ENCODE measurements at regions of chr4 and their contacts with region 1.

Region 1: GRCh38 chr4:7192252-7193029 is at the start of gene SORCS2:
- DNase-seq: peak; percentile 72
- ATAC-seq: peak; percentile 70
- H3K4me3 Mint-ChIP-seq: peak within 1 kb of the TSS; percentile 73
- H3K27ac Mint-ChIP-seq: no peak within 1 kb of the TSS
- H3K4me1 Mint-ChIP-seq: peaks cover 27% of the 10 kb centered on the region
- H3K27me3 Mint-ChIP-seq: peaks cover 50% of the 10 kb centered on the region
- CTCF ChIP-seq: peak; percentile 36; the same call in 1 of the 2 replicates
- total RNA-seq, gene SORCS2: 5.5 to 9.1 TPM (median 6.6 TPM) in 3 replicates

Region 2: DNA sequence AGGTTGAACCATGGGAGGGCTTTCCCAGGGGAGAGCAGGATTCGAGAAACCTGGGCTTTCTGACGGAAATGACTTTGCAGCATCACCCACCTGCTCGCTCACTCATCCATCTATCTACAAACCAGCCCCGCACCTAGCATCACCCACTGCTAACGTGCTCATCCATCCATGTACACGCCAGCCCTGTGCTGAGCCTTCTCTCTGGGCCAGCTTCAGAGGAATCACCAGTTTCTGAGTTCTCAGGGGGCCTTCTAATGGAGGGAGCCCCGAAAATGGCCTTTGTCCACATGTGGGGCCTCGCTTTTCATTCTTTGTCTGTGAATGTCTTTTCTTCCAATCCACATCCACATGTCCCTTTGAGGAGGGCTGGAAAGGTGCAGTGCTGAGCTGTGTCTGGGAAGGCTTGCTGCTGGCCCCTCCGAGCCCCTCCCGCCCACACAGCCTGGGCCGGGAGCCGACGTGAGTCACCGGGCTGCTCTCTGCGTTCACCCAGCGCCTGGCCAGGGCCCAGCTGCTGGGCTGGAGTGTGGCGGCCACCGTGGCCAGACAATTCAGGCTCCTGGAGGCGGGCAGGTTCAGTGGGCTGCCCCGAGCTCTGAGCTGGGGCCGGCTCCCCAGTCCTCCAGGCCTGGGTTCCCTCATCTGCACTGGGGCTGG is 14.6 kb after region 1 on chr4:
- CTCF ChIA-PET with region 1: interaction called, 24 read pairs
- POLR2A ChIA-PET with region 1: interaction called, 3 read pairs
- DNase-seq: peak; percentile 49
- ATAC-seq: peak; percentile 87
- H3K4me3 Mint-ChIP-seq: no peak overlapping the region
- H3K27ac Mint-ChIP-seq: peak overlapping the region; percentile 8; the same call in 1 of the 2 replicates
- H3K4me1 Mint-ChIP-seq: peaks cover 36% of the 10 kb centered on the region
- H3K27me3 Mint-ChIP-seq: no peaks in the 10 kb centered on the region
- CTCF ChIP-seq: no peak

Region 3: GRCh38 chr4:7295911-7296660 is 103.6 kb after region 1 on chr4:
- CTCF ChIA-PET with region 1: interaction called, 10 read pairs
- POLR2A ChIA-PET with region 1: no interaction called
- DNase-seq: peak; percentile 54
- ATAC-seq: no peak
- H3K4me3 Mint-ChIP-seq: no peak overlapping the region
- H3K27ac Mint-ChIP-seq: no peak overlapping the region
- H3K4me1 Mint-ChIP-seq: peaks cover 3% of the 10 kb centered on the region; the same call in 1 of the 2 replicates
- H3K27me3 Mint-ChIP-seq: no peaks in the 10 kb centered on the region
- CTCF ChIP-seq: no peak